Heart left ventricle (tissue), 16 donors: ENCODE measurements at regions of chr10 and their contacts with region 1.

Region 1: GRCh38 chr10:125113691-125114371 is 46.5 kb downstream of the CTBP2 start:
- DNase-seq: no peak
- ATAC-seq: peak; percentile 23 to 44 (median 28)
- H3K4me3 ChIP-seq: no peak overlapping the region
- H3K27ac ChIP-seq: peak overlapping the region in 6 of 12 donors; percentile 3 to 57 (median 34)
- H3K4me1 ChIP-seq: peaks cover 15 to 65% (median 42%) of the 10 kb centered on the region in 12 donors
- H3K27me3 ChIP-seq: no peaks in the 10 kb centered on the region
- CTCF ChIP-seq: no peak
- POLR2A ChIP-seq: no peak

Region 2: GRCh38 chr10:125060826-125061556 is 52.8 kb before region 1 on chr10:
- intact Hi-C with region 1: no loop called
- DNase-seq: peak; percentile 84 to 91 (median 87)
- ATAC-seq: peak; percentile 39 to 71 (median 67)
- H3K4me3 ChIP-seq: peak overlapping the region in 8 of 12 donors; percentile 12 to 38 (median 25)
- H3K27ac ChIP-seq: peak overlapping the region; percentile 19 to 90 (median 70)
- H3K4me1 ChIP-seq: peaks cover 27 to 100% (median 98%) of the 10 kb centered on the region in 12 donors
- H3K27me3 ChIP-seq: no peaks in the 10 kb centered on the region
- CTCF ChIP-seq: peak; percentile 77 to 95 (median 88)
- POLR2A ChIP-seq: no peak

Region 3: DNA sequence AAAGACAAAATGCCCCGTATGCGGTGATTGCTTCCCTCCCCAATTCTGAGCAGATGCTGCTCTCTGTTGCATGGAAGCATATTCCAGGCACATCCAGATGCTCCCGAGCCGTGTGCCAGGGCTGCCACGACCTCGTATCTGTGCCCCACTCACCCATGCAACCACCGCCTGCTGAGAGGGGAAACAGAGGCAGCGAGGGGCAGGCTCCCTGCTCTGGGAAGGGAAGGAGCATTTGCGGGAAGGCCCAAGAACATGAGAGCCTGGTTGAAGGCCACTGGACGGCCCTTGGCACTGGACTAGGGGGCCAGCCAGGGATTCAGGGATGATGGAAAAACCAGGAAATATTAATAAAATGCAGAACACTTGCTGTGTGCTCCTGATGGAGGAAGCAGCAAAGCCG is 42.8 kb before region 1 on chr10:
- intact Hi-C with region 1: loop called in 1 of 10 experiments (anchors 5 kb)
- DNase-seq: peak in 1 of 5 donors; percentile 6
- ATAC-seq: no peak
- H3K4me3 ChIP-seq: no peak overlapping the region
- H3K27ac ChIP-seq: no peak overlapping the region
- H3K4me1 ChIP-seq: peaks cover 0 to 27% (median 15%) of the 10 kb centered on the region in 12 donors
- H3K27me3 ChIP-seq: no peaks in the 10 kb centered on the region
- CTCF ChIP-seq: no peak
- POLR2A ChIP-seq: no peak